ENCODE measurements at regions of chrX and their contacts with region 1.

Region 1: DNA sequence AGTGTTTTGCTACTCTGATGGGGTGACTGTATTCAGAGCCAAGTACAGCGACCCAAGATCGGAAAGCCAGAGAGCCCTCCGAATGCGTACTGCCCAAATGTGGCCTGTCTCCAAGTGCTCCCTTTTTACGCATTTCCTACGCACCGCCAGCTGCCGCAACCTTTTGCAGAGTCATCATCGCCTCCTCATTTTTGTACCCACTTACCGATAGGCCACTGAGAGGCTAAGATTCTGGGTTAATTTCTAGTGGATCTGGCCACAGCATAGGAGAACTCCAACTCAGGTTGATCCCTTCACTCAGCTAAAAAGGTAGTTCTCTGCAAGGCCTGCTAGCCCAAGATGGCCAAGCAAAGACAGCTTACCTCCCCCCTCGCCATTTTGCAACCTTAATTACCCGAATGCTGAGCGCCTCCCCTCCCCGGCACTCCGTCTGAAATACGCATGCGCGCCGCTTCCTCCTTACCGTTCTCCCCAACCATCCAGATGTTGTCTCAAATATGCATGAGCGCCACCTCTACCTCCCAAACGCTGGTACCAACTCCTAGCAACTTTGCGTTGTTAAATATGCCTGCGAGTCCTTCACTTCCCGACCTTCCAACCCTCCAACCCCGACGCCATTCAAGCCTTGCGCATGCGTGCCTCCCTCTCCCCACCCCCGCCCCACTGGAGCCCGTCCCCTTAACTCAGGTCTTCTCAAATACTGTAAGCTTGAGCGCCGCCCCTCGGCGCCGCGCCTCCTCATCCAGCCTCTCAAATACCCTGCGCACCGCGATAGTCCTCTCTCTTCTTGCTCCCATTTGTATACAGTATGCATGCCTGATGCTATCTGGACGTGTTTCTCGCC is 11.8 kb upstream of the ZCCHC13 start:
- DNase-seq: peak; percentile 95
- H3K4me3 ChIP-seq: peak overlapping the region; percentile 48 to 64 (median 58)
- H3K27ac ChIP-seq: peak overlapping the region; percentile 87 to 93 (median 88)
- H3K4me1 ChIP-seq: peaks cover 0 to 14% (median 3%) of the 10 kb centered on the region in 4 donors
- H3K27me3 ChIP-seq: no peaks in the 10 kb centered on the region
- CTCF ChIP-seq: no peak
- EP300 ChIP-seq: peak in 1 of 4 donors; percentile 44
- POLR2A ChIP-seq: peak in 1 of 2 donors; percentile 14

Region 2: GRCh38 chrX:74119016-74119910 is 172.9 kb before region 1 on chrX:
- intact Hi-C with region 1: no loop called
- DNase-seq: no peak
- H3K4me3 ChIP-seq: no peak overlapping the region
- H3K27ac ChIP-seq: no peak overlapping the region
- H3K4me1 ChIP-seq: peaks cover 0 to 4% (median 0%) of the 10 kb centered on the region in 4 donors
- H3K27me3 ChIP-seq: no peaks in the 10 kb centered on the region
- CTCF ChIP-seq: no peak
- EP300 ChIP-seq: no peak
- POLR2A ChIP-seq: no peak

Region 3: GRCh38 chrX:74421036-74421739 is 129.0 kb after region 1 on chrX and contains the start of gene SLC16A2:
- intact Hi-C with region 1: loop called (anchors 5 kb)
- DNase-seq: peak; percentile 93
- H3K4me3 ChIP-seq: peak within 1 kb of the TSS; percentile 38 to 60 (median 57)
- H3K27ac ChIP-seq: peak within 1 kb of the TSS; percentile 89 to 95 (median 90)
- H3K4me1 ChIP-seq: peaks cover 0 to 16% (median 7%) of the 10 kb centered on the region in 4 donors
- H3K27me3 ChIP-seq: no peaks in the 10 kb centered on the region
- CTCF ChIP-seq: no peak
- EP300 ChIP-seq: no peak
- POLR2A ChIP-seq: no peak
- total RNA-seq, gene SLC16A2: 5.3 to 10.5 (median 7.7) TPM